ENCODE measurements at regions of chr6 and their contacts with region 1.

Region 1: GRCh38 chr6:81606965-81607381 is 145.5 kb downstream of the TENT5A start:
- DNase-seq: no peak
- H3K4me3 ChIP-seq: no peak overlapping the region
- H3K27ac ChIP-seq: no peak overlapping the region
- H3K4me1 ChIP-seq: no peaks in the 10 kb centered on the region
- H3K27me3 ChIP-seq: no peaks in the 10 kb centered on the region
- CTCF ChIP-seq: no peak

Region 2: GRCh38 chr6:80282913-80283554 is 1323.9 kb before region 1 on chr6:
- CTCF ChIA-PET with region 1: no interaction called
- POLR2A ChIA-PET with region 1: no interaction called
- intact Hi-C with region 1: no loop called
- DNase-seq: no peak
- H3K4me3 ChIP-seq: no peak overlapping the region
- H3K27ac ChIP-seq: no peak overlapping the region
- H3K4me1 ChIP-seq: no peaks in the 10 kb centered on the region; the same call in 1 of the 2 replicates
- H3K27me3 ChIP-seq: no peaks in the 10 kb centered on the region
- CTCF ChIP-seq: no peak

Region 3: GRCh38 chr6:81366972-81367371 is 240.0 kb before region 1 on chr6:
- CTCF ChIA-PET with region 1: no interaction called
- POLR2A ChIA-PET with region 1: interaction called, 12 read pairs
- intact Hi-C with region 1: no loop called
- DNase-seq: no peak
- H3K4me3 ChIP-seq: no peak overlapping the region
- H3K27ac ChIP-seq: no peak overlapping the region
- H3K4me1 ChIP-seq: no peaks in the 10 kb centered on the region
- H3K27me3 ChIP-seq: no peaks in the 10 kb centered on the region
- CTCF ChIP-seq: no peak

Region 4: DNA sequence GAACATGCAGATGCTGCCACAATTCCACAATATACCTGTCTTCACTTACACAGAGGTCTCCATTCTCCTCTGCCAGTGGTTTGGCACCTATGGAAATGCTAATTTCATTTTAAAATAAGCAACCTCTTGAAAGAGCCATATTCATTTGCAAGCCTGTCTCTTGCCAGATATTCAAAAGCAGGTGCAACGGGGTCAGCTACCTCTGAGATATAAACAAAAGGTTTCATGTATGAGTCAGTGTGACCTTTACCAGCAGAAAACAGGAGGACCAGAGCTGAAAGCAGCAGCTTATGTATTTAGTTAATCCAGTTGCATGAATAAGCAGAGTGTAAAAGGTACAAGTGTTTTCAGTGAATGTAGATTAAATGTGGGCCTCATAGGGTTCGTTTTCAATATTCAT is 89.5 kb after region 1 on chr6:
- CTCF ChIA-PET with region 1: no interaction called
- POLR2A ChIA-PET with region 1: no interaction called
- intact Hi-C with region 1: no loop called
- DNase-seq: peak; percentile 25 to 81
- H3K4me3 ChIP-seq: no peak overlapping the region
- H3K27ac ChIP-seq: peak overlapping the region; percentile 52
- H3K4me1 ChIP-seq: peaks cover 26% of the 10 kb centered on the region
- H3K27me3 ChIP-seq: no peaks in the 10 kb centered on the region
- CTCF ChIP-seq: no peak

Measured in PC-9 (cell line).